HEK293 (cell line): ENCODE measurements at regions of chr6 and their contacts with region 1.

Region 1: GRCh38 chr6:30130887-30131862 is 4.8 kb upstream of the TRIM40 start:
- H3K4me3 ChIP-seq: no peak overlapping the region
- H3K27ac ChIP-seq: no peak overlapping the region
- H3K4me1 ChIP-seq: no peaks in the 10 kb centered on the region
- CTCF ChIP-seq: peak; percentile 98

Region 2: DNA sequence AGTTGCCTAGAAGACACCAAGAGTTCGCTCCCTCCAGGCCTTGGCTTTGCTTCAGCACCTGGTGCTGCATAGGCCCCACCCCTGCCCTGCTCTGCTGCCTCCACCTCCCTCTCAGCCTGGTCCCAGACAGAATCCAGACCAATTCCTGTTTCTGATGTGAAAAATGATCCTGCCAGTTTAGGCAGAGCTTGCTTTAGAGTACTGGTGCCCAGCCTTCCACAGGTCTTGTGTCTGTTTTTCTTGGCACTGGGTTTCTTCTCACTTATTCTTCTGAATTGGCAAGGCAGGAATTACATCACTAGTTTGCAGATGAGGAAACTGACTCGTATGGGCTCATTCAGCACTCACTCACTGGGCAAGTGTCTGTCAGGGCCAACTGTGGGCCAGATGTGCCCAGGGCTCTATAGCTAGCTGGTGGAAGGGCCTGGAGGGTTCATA is 135.8 kb before region 1 on chr6:
- CTCF ChIA-PET with region 1: no interaction called
- POLR2A ChIA-PET with region 1: no interaction called
- H3K4me3 ChIP-seq: no peak overlapping the region
- H3K27ac ChIP-seq: no peak overlapping the region
- H3K4me1 ChIP-seq: 0 out of 2 replicates have a peak, but pooled peaks cover 3% of the 10 kb centered on the region
- CTCF ChIP-seq: no peak

Region 3: GRCh38 chr6:30044630-30045029 is 86.5 kb before region 1 on chr6:
- CTCF ChIA-PET with region 1: interaction called, 14 read pairs
- POLR2A ChIA-PET with region 1: no interaction called
- H3K4me3 ChIP-seq: no peak overlapping the region
- H3K27ac ChIP-seq: no peak overlapping the region
- H3K4me1 ChIP-seq: peaks cover 7% of the 10 kb centered on the region
- CTCF ChIP-seq: no peak

Region 4: DNA sequence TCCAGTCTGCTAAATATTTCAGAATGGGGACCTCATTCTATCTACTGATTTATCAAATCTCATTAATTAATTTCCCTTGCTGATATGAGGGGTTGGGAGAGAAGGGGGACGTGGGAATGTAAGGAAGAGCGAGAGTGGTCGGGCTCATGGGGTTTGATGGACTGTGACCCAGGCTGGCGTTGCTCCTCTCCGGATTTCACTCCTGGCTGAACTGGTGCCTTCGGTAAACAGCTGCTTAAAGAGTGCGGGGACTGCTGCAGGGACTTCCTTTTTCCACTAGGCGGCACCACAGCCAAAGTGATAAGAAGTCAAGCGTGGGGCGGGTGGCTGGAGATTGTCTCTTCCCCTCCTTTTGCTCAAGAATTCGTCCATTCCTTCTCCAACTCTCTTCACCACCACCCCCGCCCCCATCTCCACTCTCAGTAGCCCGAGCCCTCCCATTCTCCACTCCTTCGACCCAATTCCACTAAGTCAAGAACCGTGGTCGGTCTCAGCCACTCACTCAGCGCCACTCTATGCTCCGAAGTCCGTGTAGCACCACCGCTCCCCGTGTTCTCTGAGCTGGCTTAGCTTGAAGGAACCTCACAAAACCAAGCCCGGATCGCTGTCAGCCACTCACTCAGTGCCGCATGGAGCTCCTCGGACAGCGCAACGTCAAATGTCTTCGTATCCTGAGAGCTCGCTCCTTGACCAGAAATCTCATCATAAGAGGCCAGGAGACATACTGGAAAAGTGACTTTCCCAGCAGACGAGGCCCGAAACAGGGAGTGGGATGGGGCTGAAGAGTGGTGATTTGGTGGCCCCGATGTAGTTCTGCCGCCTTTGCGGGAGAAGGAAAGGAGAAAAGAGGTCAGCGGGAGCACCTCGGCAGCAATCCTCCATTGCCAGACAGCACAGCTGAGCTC is 28.0 kb before region 1 on chr6:
- CTCF ChIA-PET with region 1: interaction called, 200 read pairs
- POLR2A ChIA-PET with region 1: interaction called, 20 read pairs
- H3K4me3 ChIP-seq: peak overlapping the region; percentile 32
- H3K27ac ChIP-seq: no peak overlapping the region
- H3K4me1 ChIP-seq: peaks cover 12% of the 10 kb centered on the region
- CTCF ChIP-seq: peak; percentile 96

Region 5: GRCh38 chr6:30149231-30149630 is 18.1 kb after region 1 on chr6:
- CTCF ChIA-PET with region 1: interaction called, 126 read pairs
- POLR2A ChIA-PET with region 1: interaction called, 3 read pairs
- H3K4me3 ChIP-seq: no peak overlapping the region
- H3K27ac ChIP-seq: no peak overlapping the region
- H3K4me1 ChIP-seq: peaks cover 1% of the 10 kb centered on the region; the same call in 1 of the 2 replicates
- CTCF ChIP-seq: no peak

Region 6: GRCh38 chr6:30163090-30163917 is 32.1 kb after region 1 on chr6 and contains the start of gene TRIM15:
- CTCF ChIA-PET with region 1: interaction called, 49 read pairs
- POLR2A ChIA-PET with region 1: no interaction called
- H3K4me3 ChIP-seq: no peak within 1 kb of the TSS
- H3K27ac ChIP-seq: no peak within 1 kb of the TSS
- H3K4me1 ChIP-seq: no peaks in the 10 kb centered on the region
- CTCF ChIP-seq: no peak

Region 7: DNA sequence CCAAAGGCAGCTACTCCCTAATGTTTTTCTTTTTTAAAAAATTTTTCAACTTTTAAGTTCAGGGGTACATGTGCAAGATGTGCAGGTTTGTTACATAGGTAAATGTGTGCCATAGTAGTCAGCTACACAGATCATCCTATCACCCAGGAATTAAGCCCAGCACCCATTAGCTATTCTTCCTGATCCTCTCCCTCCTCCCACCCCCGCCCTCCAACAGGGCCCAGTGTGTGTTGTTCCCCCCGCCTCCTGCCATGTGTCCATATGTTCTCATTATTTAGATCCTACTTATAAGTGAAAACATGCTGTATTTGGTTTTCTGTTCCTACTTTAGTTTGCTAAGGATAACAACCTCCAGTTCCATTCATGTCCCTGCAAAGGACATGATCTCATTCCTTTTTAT is 44.6 kb after region 1 on chr6:
- CTCF ChIA-PET with region 1: interaction called, 21 read pairs
- POLR2A ChIA-PET with region 1: no interaction called
- H3K4me3 ChIP-seq: no peak overlapping the region
- H3K27ac ChIP-seq: no peak overlapping the region
- H3K4me1 ChIP-seq: no peaks in the 10 kb centered on the region
- CTCF ChIP-seq: no peak